Mammary epithelial cell (primary cell): ENCODE measurements at regions of chr12 and their contacts with region 1.

Region 1: GRCh38 chr12:39365364-39366001 is 77.4 kb downstream of the KIF21A start:
- DNase-seq: no peak
- H3K4me3 ChIP-seq: no peak overlapping the region
- H3K27ac ChIP-seq: no peak overlapping the region
- H3K4me1 ChIP-seq: no peaks in the 10 kb centered on the region
- H3K27me3 ChIP-seq: no peaks in the 10 kb centered on the region
- CTCF ChIP-seq: peak in 1 of 2 donors; percentile 33

Region 2: GRCh38 chr12:39503445-39503844 is 138.0 kb after region 1 on chr12:
- CTCF ChIA-PET with region 1: no interaction called
- dilution Hi-C with region 1: no loop called
- in situ Hi-C with region 1: no loop called
- intact Hi-C with region 1: loop called (anchors 2 kb)
- DNase-seq: peak; percentile 68
- H3K4me3 ChIP-seq: no peak overlapping the region
- H3K27ac ChIP-seq: no peak overlapping the region
- H3K4me1 ChIP-seq: peaks cover 19% of the 10 kb centered on the region
- H3K27me3 ChIP-seq: no peaks in the 10 kb centered on the region
- CTCF ChIP-seq: peak; percentile 55 to 62